ENCODE measurements at regions of chr16 and their contacts with region 1.

Region 1: DNA sequence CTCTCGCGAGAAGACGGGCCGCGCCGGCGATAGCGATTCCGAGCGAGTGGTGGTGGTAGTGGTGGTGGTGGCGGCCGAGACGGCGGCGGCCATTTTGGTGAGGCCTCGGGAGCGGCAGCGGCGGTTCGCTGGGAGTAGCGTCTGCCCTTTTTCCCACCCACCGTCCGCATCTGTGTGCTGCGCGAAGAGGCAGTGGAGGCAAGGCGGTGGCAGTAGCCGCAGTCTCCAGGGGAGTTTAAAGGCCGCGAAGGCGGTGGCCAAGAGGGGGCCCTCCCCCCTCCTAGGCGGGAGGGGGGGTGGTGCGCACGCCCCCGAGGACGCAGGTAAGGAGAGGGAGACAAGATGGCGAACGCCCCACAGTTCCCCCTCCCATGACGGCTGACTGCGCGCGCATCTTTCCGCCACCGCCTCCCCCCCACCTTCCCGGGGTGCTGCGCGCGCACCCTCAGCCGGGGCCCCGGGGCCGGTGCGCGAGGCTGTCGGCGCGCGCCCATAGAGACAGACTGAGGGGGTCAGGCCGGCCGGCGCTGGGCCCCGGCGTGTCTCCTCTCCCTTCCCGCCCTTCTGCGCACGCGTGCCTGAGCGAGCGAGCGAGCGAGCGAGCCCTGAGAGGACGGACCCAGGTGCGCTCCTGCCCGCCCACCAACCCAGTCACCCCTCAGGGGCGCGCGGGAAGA is 694 bp upstream of the SRCAP start:
- DNase-seq: peak; percentile 99
- ATAC-seq: peak; percentile 75
- H3K4me3 ChIP-seq: peak overlapping the region in 4 of 5 experiments; percentile 95 to 100 (median 97)
- H3K4me3 Mint-ChIP-seq: peak overlapping the region; percentile 95
- H3K27ac ChIP-seq: peak overlapping the region; percentile 100
- H3K27ac Mint-ChIP-seq: peak overlapping the region; percentile 100
- H3K4me1 ChIP-seq: peaks cover 19 to 25% of the 10 kb centered on the region in 2 donors
- H3K4me1 Mint-ChIP-seq: peaks cover 29% of the 10 kb centered on the region
- H3K27me3 ChIP-seq: no peaks in the 10 kb centered on the region
- H3K27me3 Mint-ChIP-seq: no peaks in the 10 kb centered on the region
- CTCF ChIP-seq: no peak

Region 2: DNA sequence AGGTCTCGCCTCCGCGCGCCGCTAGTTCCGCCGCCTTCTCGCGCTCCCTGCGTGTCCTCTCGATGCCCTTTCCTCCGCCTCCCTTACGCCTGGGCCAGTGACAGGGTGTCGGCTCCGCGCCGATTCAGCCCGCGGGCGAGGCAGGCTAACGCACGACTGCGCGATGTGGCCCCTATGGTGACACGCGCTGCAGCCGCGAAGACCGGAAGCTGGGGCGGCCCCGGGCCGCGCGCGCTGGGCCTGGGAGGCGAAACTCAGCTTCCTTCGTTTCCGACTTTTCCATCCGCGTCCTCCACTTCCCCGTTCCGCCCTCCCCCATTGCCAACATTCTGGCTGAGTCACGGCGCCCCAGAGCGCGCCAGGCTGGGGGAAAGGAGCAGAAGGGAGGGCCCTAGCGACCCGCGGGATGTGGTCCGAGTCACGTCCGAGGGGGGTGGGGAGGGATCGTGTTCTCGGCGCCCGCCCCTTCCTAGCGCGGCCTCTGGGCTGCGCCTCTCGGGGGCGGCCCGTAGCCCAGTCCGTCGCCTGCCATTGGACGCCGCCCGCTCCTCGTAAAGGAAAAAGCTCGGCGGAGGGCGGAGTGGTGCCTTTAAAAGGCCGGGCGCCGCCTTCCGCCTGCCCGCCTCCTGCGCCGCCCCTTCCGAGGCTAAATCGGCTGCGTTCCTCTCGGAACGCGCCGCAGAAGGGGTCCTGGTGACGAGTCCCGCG is 633.0 kb before region 1 on chr16 and contains the start of gene ALDOA:
- CTCF ChIA-PET with region 1: no interaction called
- POLR2A ChIA-PET with region 1: no interaction called
- intact Hi-C with region 1: loop called (anchors 10 kb)
- DNase-seq: peak; percentile 97
- ATAC-seq: peak; percentile 83
- H3K4me3 ChIP-seq: peak within 1 kb of the TSS; percentile 73 to 96 (median 87)
- H3K4me3 Mint-ChIP-seq: peak within 1 kb of the TSS; percentile 100
- H3K27ac ChIP-seq: peak within 1 kb of the TSS; percentile 82 to 88
- H3K27ac Mint-ChIP-seq: peak within 1 kb of the TSS; percentile 99
- H3K4me1 ChIP-seq: peaks cover 16 to 42% of the 10 kb centered on the region in 2 donors
- H3K4me1 Mint-ChIP-seq: peaks cover 31% of the 10 kb centered on the region
- H3K27me3 ChIP-seq: no peaks in the 10 kb centered on the region
- H3K27me3 Mint-ChIP-seq: no peaks in the 10 kb centered on the region
- CTCF ChIP-seq: no peak
- total RNA-seq, gene ALDOA: 301 and 329 TPM in 2 replicates

Region 3: DNA sequence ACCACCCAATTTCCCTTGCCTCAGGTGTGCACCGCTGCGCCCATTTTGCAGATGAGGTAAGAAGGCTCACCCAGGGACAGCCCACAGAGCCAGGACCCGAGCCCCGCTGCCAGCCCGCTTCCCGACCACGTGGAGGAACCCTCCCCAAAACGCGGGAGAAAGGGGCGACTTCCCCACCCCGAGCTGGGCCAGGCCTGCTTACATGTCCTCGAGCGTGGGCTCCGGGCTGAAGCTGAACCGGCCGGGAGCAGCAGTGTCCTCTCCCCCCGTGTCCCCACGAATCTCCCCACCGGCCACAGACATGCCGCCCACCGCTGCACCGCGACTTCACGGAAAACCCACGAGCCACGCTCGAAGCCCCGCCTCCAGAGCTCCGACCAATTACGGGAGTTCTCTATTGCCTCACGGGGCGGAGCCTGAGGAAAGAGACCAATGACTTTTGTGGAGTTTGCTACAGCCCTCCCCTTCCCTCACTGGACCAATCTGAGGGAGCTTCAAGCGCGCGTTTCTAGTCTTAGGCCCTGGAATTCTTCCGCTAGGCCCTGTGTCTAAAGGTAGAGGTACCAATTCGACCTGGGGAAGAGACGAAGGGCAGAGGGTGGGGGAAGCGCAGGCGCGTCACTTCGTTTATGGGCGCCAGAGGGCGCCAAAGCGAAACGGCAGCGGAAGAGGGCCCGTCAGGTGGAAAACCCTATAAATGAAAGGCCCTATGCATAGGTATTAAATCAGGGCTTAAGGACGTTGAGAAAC is 268.4 kb before region 1 on chr16 and contains the start of gene DCTPP1:
- CTCF ChIA-PET with region 1: interaction called, 6 read pairs
- POLR2A ChIA-PET with region 1: interaction called, 4 read pairs
- intact Hi-C with region 1: loop called (anchors 5 kb)
- DNase-seq: peak; percentile 99
- ATAC-seq: peak; percentile 97
- H3K4me3 ChIP-seq: peak within 1 kb of the TSS; percentile 78 to 98 (median 85)
- H3K4me3 Mint-ChIP-seq: no peak within 1 kb of the TSS
- H3K27ac ChIP-seq: peak within 1 kb of the TSS; percentile 79 to 86
- H3K27ac Mint-ChIP-seq: peak within 1 kb of the TSS; percentile 20
- H3K4me1 ChIP-seq: peaks cover 12 to 21% of the 10 kb centered on the region in 2 donors
- H3K4me1 Mint-ChIP-seq: peaks cover 17% of the 10 kb centered on the region
- H3K27me3 ChIP-seq: no peaks in the 10 kb centered on the region
- H3K27me3 Mint-ChIP-seq: no peaks in the 10 kb centered on the region
- CTCF ChIP-seq: peak; percentile 82
- total RNA-seq, gene DCTPP1: 25.0 and 28.9 TPM in 2 replicates

Region 4: GRCh38 chr16:30571695-30572600 is 126.3 kb before region 1 on chr16 and contains the start of gene ZNF688:
- CTCF ChIA-PET with region 1: no interaction called
- POLR2A ChIA-PET with region 1: no interaction called
- intact Hi-C with region 1: loop called (anchors 1 kb)
- DNase-seq: peak; percentile 97
- ATAC-seq: peak; percentile 86
- H3K4me3 ChIP-seq: peak within 1 kb of the TSS; percentile 72 to 89 (median 86)
- H3K4me3 Mint-ChIP-seq: peak within 1 kb of the TSS; percentile 91
- H3K27ac ChIP-seq: peak within 1 kb of the TSS; percentile 96 to 97
- H3K27ac Mint-ChIP-seq: peak within 1 kb of the TSS; percentile 99
- H3K4me1 ChIP-seq: peaks cover 29 to 43% of the 10 kb centered on the region in 2 donors
- H3K4me1 Mint-ChIP-seq: peaks cover 40% of the 10 kb centered on the region
- H3K27me3 ChIP-seq: no peaks in the 10 kb centered on the region
- H3K27me3 Mint-ChIP-seq: no peaks in the 10 kb centered on the region
- CTCF ChIP-seq: no peak
- total RNA-seq, gene ZNF688: 23.1 and 24.9 TPM in 2 replicates

Region 5: DNA sequence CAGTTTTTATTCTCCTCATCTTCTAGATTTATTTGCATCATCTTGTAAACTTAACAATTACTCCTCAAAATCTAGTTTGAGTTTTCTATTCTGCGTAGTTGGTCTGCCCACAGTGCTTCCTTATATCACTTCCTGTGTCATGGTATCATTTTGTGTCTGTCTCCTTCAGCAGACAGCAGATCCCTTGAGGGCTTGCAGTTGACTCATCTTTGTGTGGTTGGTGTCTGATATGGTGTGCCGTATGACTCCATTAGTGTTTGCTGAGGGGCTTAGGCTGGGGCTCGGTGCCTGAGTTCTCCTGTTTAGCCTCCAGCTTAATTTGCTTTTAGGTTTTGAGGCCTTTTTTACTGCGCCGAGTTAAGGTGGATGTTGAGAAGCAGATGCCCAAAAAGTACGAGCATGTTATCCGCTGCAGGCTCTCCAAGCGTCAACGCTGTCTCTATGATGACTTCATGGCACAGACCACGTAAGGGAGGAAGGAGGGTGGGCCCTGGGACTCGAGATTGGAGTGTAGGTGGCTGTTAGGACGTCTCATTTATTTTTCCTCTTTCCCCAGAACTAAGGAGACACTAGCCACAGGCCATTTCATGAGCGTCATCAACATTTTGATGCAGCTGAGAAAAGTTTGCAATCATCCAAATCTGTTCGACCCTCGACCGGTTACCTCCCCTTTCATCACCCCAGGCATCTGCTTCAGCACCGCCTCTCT is 17.6 kb after region 1 on chr16:
- CTCF ChIA-PET with region 1: interaction called, 3 read pairs
- POLR2A ChIA-PET with region 1: no interaction called
- intact Hi-C with region 1: loop called (anchors 2 kb)
- DNase-seq: peak; percentile 64
- ATAC-seq: peak; percentile 96
- H3K4me3 ChIP-seq: no peak overlapping the region
- H3K4me3 Mint-ChIP-seq: peak overlapping the region; percentile 66
- H3K27ac ChIP-seq: peak overlapping the region; percentile 20 to 68
- H3K27ac Mint-ChIP-seq: peak overlapping the region; percentile 90
- H3K4me1 ChIP-seq: peaks cover 5 to 9% of the 10 kb centered on the region in 2 donors
- H3K4me1 Mint-ChIP-seq: peaks cover 17% of the 10 kb centered on the region
- H3K27me3 ChIP-seq: no peaks in the 10 kb centered on the region
- H3K27me3 Mint-ChIP-seq: no peaks in the 10 kb centered on the region
- CTCF ChIP-seq: no peak

Region 6: DNA sequence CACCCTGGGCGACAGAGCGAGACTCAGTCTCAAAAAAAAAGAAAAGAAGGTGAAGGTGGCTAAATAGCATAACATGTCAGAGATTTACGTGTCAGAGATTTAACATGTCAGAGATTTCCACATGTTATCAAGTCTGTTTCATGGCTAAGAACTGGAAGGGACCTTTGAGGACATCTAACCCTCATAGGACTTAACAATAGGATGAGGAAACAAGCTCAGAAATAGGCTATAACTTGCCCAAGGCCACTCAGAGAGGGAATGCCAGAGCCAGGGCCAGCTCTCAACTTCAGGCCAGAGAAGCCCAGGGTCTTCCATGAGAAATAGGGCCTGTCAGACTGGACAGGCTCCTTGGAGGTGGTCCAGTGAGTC is 115.5 kb after region 1 on chr16:
- CTCF ChIA-PET with region 1: interaction called, 4 read pairs
- POLR2A ChIA-PET with region 1: no interaction called
- intact Hi-C with region 1: loop called (anchors 1 kb)
- DNase-seq: no peak
- ATAC-seq: no peak
- H3K4me3 ChIP-seq: peak overlapping the region; percentile 42 to 66 (median 57)
- H3K4me3 Mint-ChIP-seq: peak overlapping the region; percentile 88
- H3K27ac ChIP-seq: peak overlapping the region; percentile 65 to 69
- H3K27ac Mint-ChIP-seq: peak overlapping the region; percentile 85
- H3K4me1 ChIP-seq: peaks cover 9 to 15% of the 10 kb centered on the region in 2 donors
- H3K4me1 Mint-ChIP-seq: peaks cover 16% of the 10 kb centered on the region
- H3K27me3 ChIP-seq: no peaks in the 10 kb centered on the region
- H3K27me3 Mint-ChIP-seq: peaks cover 3% of the 10 kb centered on the region
- CTCF ChIP-seq: no peak

Measured in B cell (primary cell).